H1 (cell line): ENCODE measurements at regions of chr5 and their contacts with region 1.

Region 1: GRCh38 chr5:141605523-141606277 is 13.1 kb downstream of the DIAPH1 start:
- DNase-seq: no peak
- H3K4me3 ChIP-seq: no peak overlapping the region
- H3K27ac ChIP-seq: no peak overlapping the region
- H3K4me1 ChIP-seq: no peaks in the 10 kb centered on the region; a peak in 1 of 7 replicates
- H3K27me3 ChIP-seq: no peaks in the 10 kb centered on the region
- CTCF ChIP-seq: no peak
- EP300 ChIP-seq: no peak
- POLR2A ChIP-seq: no peak
- RAD21 ChIP-seq: no peak

Region 2: DNA sequence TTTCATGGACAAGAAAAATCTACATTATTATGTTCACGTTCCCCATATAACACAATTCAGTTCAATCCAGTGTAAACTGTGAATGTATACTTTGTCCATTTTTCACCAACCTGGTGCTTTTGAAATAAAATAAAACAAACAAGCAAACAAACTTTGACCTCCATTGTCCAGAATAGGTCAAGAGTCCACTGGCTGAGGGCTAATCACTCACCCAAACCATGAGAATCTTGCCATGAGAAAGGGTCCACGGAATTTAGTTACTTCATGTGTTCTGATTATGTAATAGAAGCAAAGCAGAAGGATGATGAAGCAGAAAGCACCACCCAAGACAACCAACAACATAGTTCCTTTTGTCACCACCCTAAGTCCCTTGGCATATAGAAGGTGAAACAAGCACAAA is 15.6 kb before region 1 on chr5:
- CTCF ChIA-PET with region 1: interaction called, 74 read pairs
- POLR2A ChIA-PET with region 1: interaction called, 4 read pairs
- DNase-seq: no peak
- H3K4me3 ChIP-seq: no peak overlapping the region
- H3K27ac ChIP-seq: no peak overlapping the region
- H3K4me1 ChIP-seq: no peaks in the 10 kb centered on the region
- H3K27me3 ChIP-seq: no peaks in the 10 kb centered on the region
- CTCF ChIP-seq: no peak
- EP300 ChIP-seq: no peak
- POLR2A ChIP-seq: no peak
- RAD21 ChIP-seq: no peak

Region 3: GRCh38 chr5:141664732-141665461 is 59.2 kb after region 1 on chr5:
- CTCF ChIA-PET with region 1: no interaction called
- POLR2A ChIA-PET with region 1: no interaction called
- DNase-seq: peak; percentile 66 to 94
- H3K4me3 ChIP-seq: no peak overlapping the region
- H3K27ac ChIP-seq: no peak overlapping the region
- H3K4me1 ChIP-seq: no peaks in the 10 kb centered on the region
- H3K27me3 ChIP-seq: no peaks in the 10 kb centered on the region
- CTCF ChIP-seq: peak; percentile 91 to 96 (median 91)
- EP300 ChIP-seq: no peak
- POLR2A ChIP-seq: no peak
- RAD21 ChIP-seq: peak; percentile 90 to 95